Left cardiac atrium (tissue), 4 donors: ENCODE measurements at regions of chr6 and their contacts with region 1.

Region 1: DNA sequence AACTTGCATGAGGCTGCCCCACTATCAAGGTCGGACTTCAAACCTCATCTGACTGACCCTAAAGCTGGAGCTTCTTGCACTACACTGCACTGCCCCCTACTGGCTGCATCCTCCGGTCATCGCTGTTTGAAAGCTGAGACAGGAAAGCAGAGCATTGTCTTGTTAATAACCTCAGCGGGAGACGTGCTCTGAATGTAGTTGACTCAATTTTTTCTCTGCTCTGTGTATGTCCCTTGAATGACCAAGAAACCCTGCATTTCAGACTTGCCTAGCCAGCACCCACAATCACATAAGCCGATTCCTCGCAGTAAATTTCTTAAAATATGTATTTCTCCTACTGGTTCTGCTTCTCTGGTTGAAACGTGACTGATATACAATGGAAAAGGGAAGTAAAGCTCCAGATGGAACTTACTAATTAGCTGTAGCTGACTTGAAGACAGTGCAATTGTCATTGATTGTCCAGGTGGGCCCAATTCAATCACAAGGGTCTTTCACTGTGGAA is 27.8 kb downstream of the TCF21 start:
- DNase-seq: peak; percentile 92
- ATAC-seq: peak; percentile 85 to 91

Region 2: DNA sequence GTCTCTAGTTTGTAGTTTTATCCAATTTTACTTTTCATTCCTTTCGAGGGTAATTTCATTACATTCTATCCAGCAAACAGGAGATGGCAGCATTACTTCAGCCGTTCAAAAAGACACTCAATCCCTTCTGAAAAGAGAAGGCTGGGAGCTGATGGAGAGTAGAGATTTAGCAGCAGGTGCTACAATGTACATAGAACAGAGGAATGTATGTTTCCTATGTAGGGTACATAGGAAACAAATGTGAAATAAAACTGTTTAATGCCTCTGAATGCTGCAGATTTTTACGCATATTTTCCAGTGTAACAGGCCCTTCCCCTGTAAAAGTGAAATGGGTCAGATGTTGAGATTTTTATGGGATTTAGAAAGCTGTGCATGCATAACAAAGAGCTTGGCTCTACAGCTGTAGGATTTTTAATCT is 1086.4 kb before region 1 on chr6:
- intact Hi-C with region 1: loop called in 1 of 2 experiments (anchors 10 kb)
- DNase-seq: no peak
- ATAC-seq: peak in 1 of 2 donors; percentile 30

Region 3: DNA sequence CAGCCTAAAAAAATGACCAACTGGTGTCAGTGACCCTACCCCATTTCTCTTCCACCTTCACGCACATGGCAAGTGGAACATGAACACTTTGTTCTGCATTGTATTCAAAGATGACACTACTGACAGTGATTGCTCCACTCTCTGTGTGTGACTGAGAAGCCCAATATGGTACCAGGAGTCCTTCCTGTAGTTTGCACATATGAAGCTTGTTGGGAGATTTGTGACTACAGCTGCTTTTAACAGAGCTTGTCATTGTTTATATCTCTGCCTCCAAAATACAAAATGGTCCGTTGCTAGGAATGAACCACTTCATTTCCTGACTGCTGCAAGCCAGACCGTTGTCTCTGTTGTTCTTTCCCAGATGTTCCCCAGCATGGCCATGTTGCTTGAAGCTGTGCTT is 168.1 kb before region 1 on chr6:
- intact Hi-C with region 1: no loop called
- DNase-seq: no peak
- ATAC-seq: no peak

Region 4: DNA sequence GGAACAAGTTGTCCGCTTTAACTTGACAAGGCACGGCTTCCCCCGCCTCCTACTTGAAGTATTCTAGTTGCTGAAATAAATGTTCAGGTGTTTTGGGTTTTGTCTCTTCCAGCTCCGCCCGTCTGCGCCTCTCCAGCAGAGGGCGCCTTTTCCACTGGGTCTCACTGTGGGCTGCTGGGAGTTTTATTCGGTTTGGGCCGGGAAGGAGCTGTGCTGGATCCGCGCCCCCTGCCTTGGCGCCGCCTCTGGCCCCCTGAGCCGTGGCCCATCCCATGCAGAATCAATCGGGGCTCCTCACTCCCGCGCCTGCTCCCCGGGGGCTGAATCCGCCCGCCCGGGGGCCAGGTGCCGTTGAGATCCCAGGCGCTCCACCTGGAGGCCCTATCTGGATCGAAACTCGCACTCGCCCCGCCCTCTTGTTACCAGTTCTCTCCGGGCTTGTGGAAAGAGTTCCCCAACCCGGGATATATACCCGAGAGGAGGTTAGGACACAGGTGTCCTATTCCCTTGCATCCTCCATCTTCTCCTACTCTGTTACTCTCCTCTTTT is 78.8 kb before region 1 on chr6:
- intact Hi-C with region 1: loop called in 1 of 2 experiments (anchors 5 kb)
- DNase-seq: peak; percentile 45
- ATAC-seq: peak; percentile 38 to 78